Activated CD4-positive, alpha-beta memory T cell treated with anti-CD3 and anti-CD28 coated beads for 36 hours (primary cell): ENCODE measurements at regions of chr1 and their contacts with region 1.

Region 1: DNA sequence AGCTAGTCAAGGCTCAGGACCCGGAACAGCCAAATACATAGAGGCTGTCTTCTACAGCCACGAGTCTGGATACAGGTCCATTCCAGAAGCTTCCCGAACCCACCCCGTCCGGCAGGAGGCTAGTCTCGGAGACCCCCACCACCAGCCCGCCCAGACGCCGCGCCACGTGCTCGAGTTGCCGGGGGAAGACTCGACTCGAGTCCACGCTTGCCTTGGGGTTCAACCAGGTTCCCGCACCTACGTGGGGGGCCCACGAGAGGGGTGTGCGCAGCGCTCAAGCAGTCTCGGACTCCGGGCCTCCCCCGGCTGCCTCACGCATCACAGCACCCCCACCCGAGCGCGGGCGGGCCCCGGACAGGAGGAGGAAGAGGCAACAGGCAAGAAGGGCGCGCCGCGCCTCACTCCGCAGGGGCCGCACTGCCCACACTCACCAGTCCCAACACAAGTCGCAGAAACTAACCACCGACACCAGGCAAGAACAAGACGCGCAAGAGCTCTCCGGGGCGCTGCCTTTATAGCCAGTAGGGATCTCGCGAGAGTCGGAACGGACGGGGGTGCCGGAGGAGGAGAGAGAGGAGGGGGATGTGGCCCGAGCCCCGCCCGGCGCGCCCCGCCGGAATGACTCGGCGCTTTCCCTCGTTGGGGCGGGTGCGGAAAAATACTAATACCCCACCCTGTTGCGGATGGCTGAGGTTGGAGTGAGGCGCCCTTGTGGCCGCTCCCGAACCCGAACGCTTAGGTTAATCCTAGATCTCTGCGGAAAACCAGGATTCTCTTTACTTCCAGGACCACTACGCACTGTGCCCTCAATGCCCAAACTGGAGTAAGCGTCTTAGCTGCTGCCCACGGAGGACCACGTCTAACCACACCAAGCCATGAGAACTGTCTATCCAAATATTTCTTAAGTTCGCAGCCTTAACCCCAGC is at the start of gene PRDX1:
- DNase-seq: peak; percentile 98
- H3K4me3 Mint-ChIP-seq: peak within 1 kb of the TSS; percentile 94
- H3K27ac Mint-ChIP-seq: peak within 1 kb of the TSS; percentile 94
- H3K4me1 Mint-ChIP-seq: peaks cover 43% of the 10 kb centered on the region
- H3K27me3 Mint-ChIP-seq: peaks cover 1% of the 10 kb centered on the region
- total RNA-seq, gene PRDX1: 479 to 481 TPM

Region 2: GRCh38 chr1:45303582-45304310 is 217.9 kb before region 1 on chr1:
- CTCF ChIA-PET with region 1: no interaction called
- POLR2A ChIA-PET with region 1: interaction called, 5 read pairs
- intact Hi-C with region 1: loop called (anchors 1 kb)
- DNase-seq: peak; percentile 100
- H3K4me3 Mint-ChIP-seq: peak overlapping the region; percentile 89
- H3K27ac Mint-ChIP-seq: peak overlapping the region; percentile 96
- H3K4me1 Mint-ChIP-seq: peaks cover 29% of the 10 kb centered on the region
- H3K27me3 Mint-ChIP-seq: no peaks in the 10 kb centered on the region

Region 3: GRCh38 chr1:45499415-45499769 is 22.3 kb before region 1 on chr1:
- CTCF ChIA-PET with region 1: interaction called, 3 read pairs
- POLR2A ChIA-PET with region 1: interaction called, 32 read pairs
- intact Hi-C with region 1: loop called (anchors 1 kb)
- DNase-seq: peak; percentile 39
- H3K4me3 Mint-ChIP-seq: peak overlapping the region; percentile 95
- H3K27ac Mint-ChIP-seq: peak overlapping the region; percentile 83
- H3K4me1 Mint-ChIP-seq: peaks cover 30% of the 10 kb centered on the region
- H3K27me3 Mint-ChIP-seq: no peaks in the 10 kb centered on the region

Region 4: GRCh38 chr1:45543581-45544417 is 22.1 kb after region 1 on chr1:
- CTCF ChIA-PET with region 1: interaction called, 4 read pairs
- POLR2A ChIA-PET with region 1: interaction called, 50 read pairs
- intact Hi-C with region 1: loop called (anchors 1 kb)
- DNase-seq: peak; percentile 87
- H3K4me3 Mint-ChIP-seq: peak overlapping the region; percentile 10
- H3K27ac Mint-ChIP-seq: peak overlapping the region; percentile 60
- H3K4me1 Mint-ChIP-seq: peaks cover 26% of the 10 kb centered on the region
- H3K27me3 Mint-ChIP-seq: no peaks in the 10 kb centered on the region

Region 5: DNA sequence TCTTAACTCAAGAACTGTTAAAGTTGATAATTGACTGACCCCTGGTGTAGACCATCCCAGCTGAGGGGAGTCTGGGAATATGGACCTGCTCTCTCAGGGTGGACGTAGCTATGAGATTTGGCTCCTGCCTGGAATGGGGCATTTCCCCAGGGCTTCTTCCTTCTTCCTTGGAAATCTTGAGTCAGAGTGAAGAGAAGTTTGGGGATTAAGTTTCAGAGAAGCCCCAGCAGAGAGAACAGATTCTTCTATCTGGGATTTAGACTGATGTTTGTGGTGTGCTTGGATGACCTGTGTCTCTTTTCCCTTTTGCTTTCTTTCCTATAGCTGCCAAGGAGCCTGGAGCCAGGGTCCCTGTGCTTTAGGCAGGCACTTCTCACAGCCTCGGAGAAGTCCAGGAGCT is 42.2 kb after region 1 on chr1:
- CTCF ChIA-PET with region 1: interaction called, 58 read pairs
- POLR2A ChIA-PET with region 1: interaction called, 11 read pairs
- intact Hi-C with region 1: no loop called
- DNase-seq: no peak
- H3K4me3 Mint-ChIP-seq: no peak overlapping the region
- H3K27ac Mint-ChIP-seq: no peak overlapping the region
- H3K4me1 Mint-ChIP-seq: peaks cover 3% of the 10 kb centered on the region
- H3K27me3 Mint-ChIP-seq: no peaks in the 10 kb centered on the region

Region 6: GRCh38 chr1:45654540-45655280 is 133.0 kb after region 1 on chr1:
- CTCF ChIA-PET with region 1: no interaction called
- POLR2A ChIA-PET with region 1: interaction called, 10 read pairs
- intact Hi-C with region 1: no loop called
- DNase-seq: peak; percentile 34
- H3K4me3 Mint-ChIP-seq: peak overlapping the region; percentile 20
- H3K27ac Mint-ChIP-seq: peak overlapping the region; percentile 61
- H3K4me1 Mint-ChIP-seq: peaks cover 22% of the 10 kb centered on the region
- H3K27me3 Mint-ChIP-seq: no peaks in the 10 kb centered on the region